ENCODE measurements at regions of chr9 and their contacts with region 1.

Region 1: DNA sequence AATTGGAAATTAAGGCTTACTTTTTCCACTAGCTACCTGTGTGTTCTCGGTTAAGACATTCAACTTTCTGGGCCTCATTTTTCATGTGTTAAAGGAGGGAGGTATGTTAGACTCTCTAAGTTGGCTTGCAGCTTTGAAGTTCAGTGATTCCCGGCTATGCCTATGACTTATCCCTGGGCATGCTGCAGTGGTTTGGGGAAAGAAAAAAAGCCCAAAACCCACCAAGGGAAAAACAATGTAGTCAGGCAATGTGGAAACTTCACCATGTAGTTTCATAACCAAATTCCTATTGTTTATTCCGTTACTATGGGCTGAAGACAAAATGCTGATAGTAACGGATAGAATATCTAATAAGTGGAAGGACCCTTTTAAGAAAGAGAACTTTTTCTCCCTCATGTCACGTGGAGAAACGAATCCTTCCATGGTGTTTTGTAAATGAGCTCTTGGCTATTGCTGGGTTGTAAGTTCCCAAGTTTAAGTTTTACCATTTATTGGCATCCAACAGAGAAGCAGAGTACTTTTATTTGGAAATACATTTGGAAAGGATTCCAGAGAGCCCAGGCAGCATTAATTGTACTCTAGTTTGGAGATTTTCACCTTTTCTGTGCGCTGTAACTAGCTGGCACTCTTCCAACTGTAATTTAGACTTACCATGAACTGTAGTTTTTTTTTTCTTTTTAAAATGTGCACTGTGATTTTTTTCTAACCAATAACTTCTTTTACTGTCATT is 84.9 kb upstream of the MPDZ start:
- DNase-seq: no peak
- CTCF ChIP-seq: no peak

Region 2: DNA sequence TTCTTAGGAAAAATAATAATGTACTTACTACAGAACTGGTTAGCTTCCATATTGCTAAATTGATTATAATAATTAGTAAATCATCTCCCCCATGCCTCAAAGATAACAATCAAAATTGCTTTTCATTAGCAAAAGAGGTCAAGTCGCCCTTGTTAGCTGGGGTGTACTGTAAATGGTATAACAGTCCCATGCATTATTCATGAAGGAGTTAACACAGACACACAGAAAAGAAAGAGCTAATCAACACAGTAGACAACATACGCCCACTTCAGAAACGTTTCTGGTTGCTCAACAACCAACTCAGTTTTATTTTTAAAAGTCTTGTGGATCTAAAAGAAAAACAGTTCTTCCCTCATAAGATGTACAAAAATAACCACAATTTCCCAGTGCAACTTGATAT is 185.2 kb before region 1 on chr9:
- CTCF ChIA-PET with region 1: no interaction called
- POLR2A ChIA-PET with region 1: no interaction called
- DNase-seq: no peak
- CTCF ChIP-seq: no peak

Region 3: DNA sequence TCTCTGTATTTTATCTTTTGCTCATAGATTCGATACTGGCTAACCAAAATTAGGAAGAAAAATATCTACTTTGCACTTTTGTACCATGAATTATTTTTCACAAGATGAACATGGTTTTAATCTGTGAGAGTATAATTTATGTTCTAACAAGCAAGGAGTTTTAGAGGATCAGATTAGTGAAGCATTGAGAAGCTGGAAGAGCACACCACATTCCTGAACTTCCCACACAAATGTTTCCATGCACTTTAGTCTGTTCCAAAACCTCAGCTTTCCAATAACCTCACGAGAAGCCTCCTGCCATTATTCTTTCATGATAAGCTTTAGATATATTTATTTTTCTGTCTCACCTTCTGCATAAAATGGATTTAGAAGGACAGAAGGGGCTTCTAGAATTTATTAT is 13.7 kb after region 1 on chr9:
- CTCF ChIA-PET with region 1: interaction called, 13 read pairs
- POLR2A ChIA-PET with region 1: no interaction called
- DNase-seq: no peak
- CTCF ChIP-seq: no peak

Measured in GM10248 (cell line).